ENCODE measurements at regions of chr10 and their contacts with region 1.

Region 1: DNA sequence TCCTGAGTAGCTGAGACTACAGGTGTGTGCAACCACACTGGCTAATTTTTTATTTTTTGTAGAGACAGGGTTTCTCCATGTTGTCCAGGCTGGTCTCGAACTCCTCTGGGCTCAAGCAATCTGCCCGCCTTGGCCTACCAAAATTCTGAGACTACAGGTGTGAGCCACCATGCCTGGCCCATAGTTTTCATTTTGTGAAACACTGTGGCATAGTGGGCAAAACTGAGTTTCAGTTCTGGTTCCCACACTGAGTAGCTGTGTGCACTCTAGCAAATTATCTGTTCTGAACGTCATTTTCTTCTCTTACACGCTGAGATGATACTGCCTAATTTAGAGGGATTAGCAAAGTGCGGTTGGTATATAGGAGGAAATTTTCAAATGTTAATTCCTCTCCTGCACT is 13.5 kb downstream of the ATP5MK start:
- DNase-seq: no peak
- H3K4me3 ChIP-seq: no peak overlapping the region
- H3K27ac ChIP-seq: no peak overlapping the region
- H3K4me1 ChIP-seq: no peaks in the 10 kb centered on the region
- CTCF ChIP-seq: no peak

Region 2: DNA sequence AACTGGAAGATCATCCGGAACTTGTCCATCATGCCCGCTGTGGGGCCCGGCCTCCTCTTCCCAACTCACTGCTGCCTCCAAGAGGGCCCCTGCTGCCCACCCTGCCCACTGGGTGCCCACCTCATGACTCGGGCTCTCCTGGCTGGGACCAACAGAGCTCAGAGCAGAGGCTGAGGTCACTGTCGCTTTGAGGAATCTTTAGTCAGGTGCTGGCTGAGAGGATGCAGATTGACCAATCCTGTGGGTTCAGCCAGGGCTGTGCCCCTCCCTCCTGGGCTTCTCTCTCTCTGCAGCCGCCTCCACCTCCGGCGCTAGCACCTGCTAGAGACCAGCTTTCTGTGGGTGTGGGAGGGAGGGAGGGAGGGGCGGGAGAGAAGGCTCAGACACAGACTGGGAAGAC is 76.0 kb after region 1 on chr10 and contains the start of gene CALHM1:
- CTCF ChIA-PET with region 1: no interaction called
- POLR2A ChIA-PET with region 1: interaction called, 12 read pairs
- intact Hi-C with region 1: no loop called
- DNase-seq: peak; percentile 70
- H3K4me3 ChIP-seq: no peak within 1 kb of the TSS
- H3K27ac ChIP-seq: no peak within 1 kb of the TSS
- H3K4me1 ChIP-seq: peaks cover 27% of the 10 kb centered on the region
- CTCF ChIP-seq: no peak
- total RNA-seq, gene CALHM1: not detected in 2 replicates